ENCODE measurements at regions of chr6 and their contacts with region 1.

Region 1: DNA sequence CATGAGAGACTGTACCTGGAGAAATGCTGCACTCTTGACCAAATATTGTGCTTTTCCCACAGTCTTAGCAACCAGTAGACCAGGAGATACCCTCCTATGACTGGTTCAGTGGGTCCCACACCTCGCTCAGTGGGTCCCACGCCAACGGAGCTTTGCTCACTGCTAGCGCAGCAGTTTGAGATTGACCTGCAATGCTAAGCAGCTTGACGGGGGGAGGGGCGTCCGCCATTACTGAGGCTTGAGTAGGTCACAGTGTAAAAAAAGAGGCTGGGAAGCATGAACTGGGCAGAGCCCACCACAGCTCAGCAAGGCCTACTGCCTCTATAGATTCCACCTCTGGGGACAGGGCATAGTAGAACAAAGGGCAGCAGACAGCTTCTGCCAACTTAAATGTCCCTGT is 49.0 kb upstream of the HIVEP2 start:
- DNase-seq: no peak
- H3K4me3 Mint-ChIP-seq: no peak overlapping the region
- H3K27ac Mint-ChIP-seq: no peak overlapping the region
- H3K4me1 Mint-ChIP-seq: peaks cover 7% of the 10 kb centered on the region
- H3K27me3 Mint-ChIP-seq: no peaks in the 10 kb centered on the region

Region 2: DNA sequence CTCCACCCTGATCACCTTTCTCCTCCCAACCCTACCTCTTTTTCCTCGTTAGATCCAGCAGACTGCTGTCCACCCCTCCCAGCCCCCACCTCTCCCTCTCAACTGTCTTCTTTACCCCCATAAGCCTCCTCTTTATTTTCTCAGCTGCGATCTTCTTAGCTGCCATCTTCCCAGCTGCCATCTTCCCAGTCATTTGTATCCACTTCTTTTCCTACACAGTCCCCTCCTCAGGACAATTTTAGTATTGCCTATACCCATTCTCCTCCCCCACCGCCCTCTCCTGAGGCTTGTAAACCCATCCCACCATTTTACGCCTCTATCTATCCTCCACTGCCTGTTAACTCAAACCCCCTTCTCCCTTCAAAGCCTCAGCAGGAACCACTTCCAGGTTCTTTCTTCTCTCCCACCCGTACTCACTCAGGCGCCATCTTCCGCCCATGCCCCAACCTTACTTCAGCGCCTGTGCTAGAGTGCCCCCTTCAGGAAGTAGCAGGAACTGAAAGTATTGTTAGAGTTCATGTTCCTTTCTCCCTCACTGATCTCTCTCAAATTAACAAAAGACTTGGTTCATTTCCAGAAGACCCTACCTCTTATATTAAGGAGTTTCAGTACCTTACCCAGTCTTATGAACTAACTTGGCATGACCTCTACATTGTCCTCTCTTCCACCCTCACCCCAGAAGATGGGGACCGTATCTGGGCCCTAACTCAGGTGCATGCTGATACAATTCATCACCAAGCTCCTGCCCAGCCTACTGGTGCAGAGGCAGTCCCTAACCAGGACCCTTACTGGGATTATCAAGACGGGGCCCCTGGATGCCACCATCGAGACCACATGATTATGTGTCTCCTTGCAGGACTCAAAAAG is 456.1 kb before region 1 on chr6:
- CTCF ChIA-PET with region 1: no interaction called
- POLR2A ChIA-PET with region 1: interaction called, 12 read pairs
- DNase-seq: peak; percentile 16
- H3K4me3 Mint-ChIP-seq: no peak overlapping the region
- H3K27ac Mint-ChIP-seq: no peak overlapping the region
- H3K4me1 Mint-ChIP-seq: peaks cover 3% of the 10 kb centered on the region
- H3K27me3 Mint-ChIP-seq: no peaks in the 10 kb centered on the region

Region 3: DNA sequence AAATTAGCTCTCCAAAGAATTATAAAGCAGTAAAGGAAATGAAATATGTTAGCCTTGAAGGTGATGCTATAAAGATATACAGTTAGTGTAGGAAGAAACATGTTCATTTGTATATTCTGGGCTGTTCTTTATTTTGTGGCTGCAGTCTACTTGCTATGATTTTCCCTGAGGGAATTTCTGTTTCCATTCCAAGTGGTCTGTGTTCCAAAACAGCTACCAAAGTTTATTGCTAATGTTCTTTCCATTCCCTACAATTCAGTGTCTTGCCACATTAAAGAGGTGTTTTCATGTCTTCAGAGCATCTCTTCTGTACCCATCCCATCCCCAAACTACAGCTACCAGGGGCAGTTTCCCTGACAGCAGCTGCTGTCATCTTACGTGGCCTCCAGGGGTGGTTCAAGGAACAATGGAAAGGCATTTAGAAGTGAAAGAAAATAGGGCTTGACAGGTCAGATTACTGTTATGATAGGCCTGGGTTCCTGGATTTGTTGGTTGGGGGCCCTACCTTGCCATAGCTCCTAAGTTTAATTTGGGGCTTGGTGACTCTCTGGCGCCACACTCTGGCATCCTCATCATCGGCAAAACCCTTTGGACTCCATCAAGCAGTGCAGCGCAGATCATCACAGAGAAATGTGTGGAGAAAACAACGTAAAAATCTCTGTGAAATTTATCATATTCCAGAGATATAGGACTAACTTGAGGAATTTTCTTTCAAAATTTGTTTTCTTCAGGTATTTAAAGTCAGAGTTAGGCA is 32.9 kb after region 1 on chr6:
- CTCF ChIA-PET with region 1: no interaction called
- POLR2A ChIA-PET with region 1: no interaction called
- DNase-seq: peak; percentile 48
- H3K4me3 Mint-ChIP-seq: no peak overlapping the region
- H3K27ac Mint-ChIP-seq: no peak overlapping the region
- H3K4me1 Mint-ChIP-seq: no peaks in the 10 kb centered on the region
- H3K27me3 Mint-ChIP-seq: no peaks in the 10 kb centered on the region